CD4-positive, alpha-beta T cell (primary cell): ENCODE measurements at regions of chr13 and their contacts with region 1.

Region 1: GRCh38 chr13:44917589-44918325 is 71.5 kb downstream of the NUFIP1 start:
- DNase-seq: peak; percentile 95 to 99 (median 98)
- ATAC-seq: peak; percentile 77
- H3K4me3 ChIP-seq: peak overlapping the region; percentile 62
- H3K4me3 Mint-ChIP-seq: no peak overlapping the region
- H3K27ac ChIP-seq: peak overlapping the region; percentile 84 to 91
- H3K27ac Mint-ChIP-seq: no peak overlapping the region
- H3K4me1 ChIP-seq: peaks cover 19% of the 10 kb centered on the region
- H3K4me1 Mint-ChIP-seq: peaks cover 5% of the 10 kb centered on the region
- H3K27me3 ChIP-seq: no peaks in the 10 kb centered on the region
- H3K27me3 Mint-ChIP-seq: no peaks in the 10 kb centered on the region
- CTCF ChIP-seq: no peak

Region 2: GRCh38 chr13:44141725-44142539 is 775.8 kb before region 1 on chr13:
- CTCF ChIA-PET with region 1: no interaction called
- POLR2A ChIA-PET with region 1: no interaction called
- intact Hi-C with region 1: loop called in 1 of 2 experiments (anchors 5 kb)
- DNase-seq: peak; percentile 76 to 95 (median 90)
- ATAC-seq: peak; percentile 96
- H3K4me3 ChIP-seq: peak overlapping the region; percentile 84
- H3K4me3 Mint-ChIP-seq: peak overlapping the region; percentile 93
- H3K27ac ChIP-seq: peak overlapping the region; percentile 48 to 76
- H3K27ac Mint-ChIP-seq: peak overlapping the region; percentile 77
- H3K4me1 ChIP-seq: peaks cover 15% of the 10 kb centered on the region
- H3K4me1 Mint-ChIP-seq: peaks cover 16% of the 10 kb centered on the region
- H3K27me3 ChIP-seq: no peaks in the 10 kb centered on the region
- H3K27me3 Mint-ChIP-seq: no peaks in the 10 kb centered on the region
- CTCF ChIP-seq: no peak

Region 3: DNA sequence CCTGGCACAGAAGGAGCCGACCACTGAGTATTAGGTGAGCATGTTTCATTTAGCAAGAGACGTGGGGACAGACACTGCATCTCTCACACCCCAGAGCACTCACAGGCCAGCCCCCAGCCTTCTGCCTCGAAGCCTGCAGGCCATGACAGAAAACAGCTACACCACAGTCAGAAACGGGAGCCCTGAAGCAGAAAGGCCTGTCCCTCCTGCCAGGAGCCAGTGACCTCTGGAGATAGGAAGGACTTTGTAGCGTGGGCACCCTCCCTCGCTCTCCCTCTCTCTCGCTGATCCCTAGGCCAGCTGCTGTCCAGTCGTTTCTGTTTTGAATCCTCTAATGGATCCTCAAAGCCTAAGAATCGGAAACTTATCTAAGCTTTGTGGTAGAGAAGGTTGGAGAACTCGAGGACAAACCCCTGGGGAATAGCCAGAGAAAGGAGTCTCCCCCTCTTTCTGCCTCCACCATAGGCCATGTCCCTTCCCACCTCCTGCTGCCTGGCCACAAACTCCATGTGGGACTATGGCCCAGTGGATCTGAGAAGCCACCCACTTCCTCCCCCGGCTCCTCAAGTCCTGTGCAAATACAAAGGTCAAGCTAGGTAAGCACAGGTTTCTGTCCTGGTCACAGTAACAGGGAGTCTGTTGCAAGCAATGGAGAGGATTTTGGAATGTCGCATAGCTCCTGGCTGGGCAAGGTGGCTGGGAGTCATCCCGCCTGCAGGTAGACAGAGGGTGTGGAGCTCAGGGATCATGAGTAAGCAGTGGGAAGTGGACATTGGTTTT is 23.6 kb before region 1 on chr13:
- CTCF ChIA-PET with region 1: no interaction called
- POLR2A ChIA-PET with region 1: no interaction called
- intact Hi-C with region 1: no loop called
- DNase-seq: no peak
- ATAC-seq: no peak
- H3K4me3 ChIP-seq: no peak overlapping the region
- H3K4me3 Mint-ChIP-seq: no peak overlapping the region
- H3K27ac ChIP-seq: no peak overlapping the region
- H3K27ac Mint-ChIP-seq: no peak overlapping the region
- H3K4me1 ChIP-seq: no peaks in the 10 kb centered on the region
- H3K4me1 Mint-ChIP-seq: no peaks in the 10 kb centered on the region
- H3K27me3 ChIP-seq: no peaks in the 10 kb centered on the region
- H3K27me3 Mint-ChIP-seq: peaks cover 4% of the 10 kb centered on the region
- CTCF ChIP-seq: no peak

Region 4: DNA sequence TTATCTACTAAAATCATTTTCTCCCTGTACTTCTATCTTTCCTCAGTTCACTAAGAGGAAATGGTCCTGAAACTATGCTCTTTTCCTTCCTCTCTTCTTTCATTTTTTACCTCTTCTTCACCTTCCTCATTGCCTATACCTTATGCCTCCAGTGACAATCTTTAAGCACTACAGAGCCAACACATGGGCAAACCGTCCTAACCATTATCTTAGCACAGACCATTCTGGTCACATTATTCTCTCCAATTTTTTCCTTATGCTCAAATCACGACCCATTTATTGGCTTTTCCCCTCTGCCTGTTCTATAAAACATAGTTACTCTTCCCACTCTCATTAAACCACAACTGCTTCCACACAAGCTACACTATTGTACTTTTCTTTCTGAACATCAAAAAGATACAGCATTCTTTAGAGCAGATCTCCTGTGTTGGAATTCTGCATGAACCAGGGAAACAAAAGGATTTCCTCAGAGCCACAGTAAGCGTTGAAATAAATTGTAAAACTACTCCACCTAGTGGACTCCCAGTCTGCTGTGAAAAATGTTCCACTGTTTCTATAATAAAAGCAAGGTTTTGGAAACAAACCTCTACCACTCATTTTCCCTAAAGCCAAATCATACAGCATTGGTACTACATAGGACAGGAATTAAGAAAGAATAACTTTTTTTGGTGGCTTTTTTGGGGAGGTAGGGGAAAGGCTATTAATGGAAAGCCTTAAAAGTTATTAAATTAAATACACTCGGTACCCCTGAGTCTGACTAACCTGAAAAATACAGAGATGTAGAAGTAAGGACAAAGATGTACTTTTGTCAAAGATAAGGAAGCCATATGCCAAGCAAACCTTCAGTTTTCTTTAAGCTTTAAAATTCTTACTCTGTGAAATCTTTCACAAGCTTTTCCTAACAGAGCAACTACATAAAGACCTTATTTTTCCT is 52.1 kb after region 1 on chr13:
- CTCF ChIA-PET with region 1: interaction called, 3 read pairs
- POLR2A ChIA-PET with region 1: interaction called, 3 read pairs
- intact Hi-C with region 1: loop called in 1 of 2 experiments (anchors 5 kb)
- DNase-seq: peak in 4 of 14 experiments; percentile 5 to 47 (median 42)
- ATAC-seq: no peak
- H3K4me3 ChIP-seq: no peak overlapping the region
- H3K4me3 Mint-ChIP-seq: no peak overlapping the region
- H3K27ac ChIP-seq: no peak overlapping the region
- H3K27ac Mint-ChIP-seq: no peak overlapping the region
- H3K4me1 ChIP-seq: no peaks in the 10 kb centered on the region
- H3K4me1 Mint-ChIP-seq: no peaks in the 10 kb centered on the region
- H3K27me3 ChIP-seq: no peaks in the 10 kb centered on the region
- H3K27me3 Mint-ChIP-seq: no peaks in the 10 kb centered on the region
- CTCF ChIP-seq: peak; percentile 66

Region 5: GRCh38 chr13:45119991-45120864 is 202.5 kb after region 1 on chr13 and contains the start of gene GTF2F2:
- CTCF ChIA-PET with region 1: no interaction called
- POLR2A ChIA-PET with region 1: interaction called, 6 read pairs
- intact Hi-C with region 1: loop called in 1 of 2 experiments (anchors 2 kb)
- DNase-seq: peak; percentile 77 to 94 (median 82)
- ATAC-seq: peak; percentile 59
- H3K4me3 ChIP-seq: peak within 1 kb of the TSS; percentile 75
- H3K4me3 Mint-ChIP-seq: no peak within 1 kb of the TSS
- H3K27ac ChIP-seq: peak within 1 kb of the TSS; percentile 83 to 92
- H3K27ac Mint-ChIP-seq: no peak within 1 kb of the TSS
- H3K4me1 ChIP-seq: peaks cover 23% of the 10 kb centered on the region
- H3K4me1 Mint-ChIP-seq: peaks cover 12% of the 10 kb centered on the region
- H3K27me3 ChIP-seq: no peaks in the 10 kb centered on the region
- H3K27me3 Mint-ChIP-seq: no peaks in the 10 kb centered on the region
- CTCF ChIP-seq: no peak
- total RNA-seq, gene GTF2F2: 11.7 to 14.8 TPM

Region 6: DNA sequence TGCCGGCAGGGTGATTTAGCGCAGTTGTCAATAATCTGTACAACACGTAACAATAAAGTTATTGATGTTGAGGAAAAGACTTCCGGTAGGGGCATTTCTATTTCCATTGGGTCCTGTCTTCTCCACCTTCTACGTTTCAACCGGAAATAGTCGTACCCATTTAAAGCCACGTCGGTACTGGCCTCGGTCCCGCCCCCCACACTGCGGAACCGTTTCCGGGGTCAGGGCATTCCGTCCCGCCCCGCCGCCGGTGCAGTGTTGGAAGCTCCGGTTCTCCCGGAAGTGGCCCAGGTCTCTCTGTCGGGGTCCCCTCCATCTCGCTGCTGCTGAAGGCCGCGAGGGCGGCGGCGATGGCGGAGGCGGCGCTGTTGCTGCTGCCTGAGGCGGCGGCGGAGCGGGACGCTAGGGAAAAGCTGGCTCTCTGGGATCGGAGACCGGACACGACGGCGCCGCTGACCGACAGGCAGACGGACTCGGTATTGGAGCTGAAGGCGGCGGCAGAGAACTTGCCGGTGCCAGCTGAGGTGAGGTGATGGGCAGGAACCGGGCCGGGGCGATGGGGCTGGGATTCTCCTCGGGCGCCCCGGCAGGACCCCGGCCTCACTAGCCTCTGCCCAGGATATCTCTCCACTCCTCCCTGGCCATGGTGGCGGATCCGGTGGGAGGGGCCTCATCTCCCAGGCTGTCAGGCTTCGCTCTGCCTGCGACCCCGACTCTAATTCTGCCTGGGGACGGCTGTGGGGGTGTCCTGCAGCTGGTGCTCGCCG is 547.1 kb after region 1 on chr13 and contains the start of gene COG3:
- CTCF ChIA-PET with region 1: no interaction called
- POLR2A ChIA-PET with region 1: interaction called, 4 read pairs
- intact Hi-C with region 1: loop called in 1 of 2 experiments (anchors 10 kb)
- DNase-seq: peak; percentile 88 to 98 (median 93)
- ATAC-seq: peak; percentile 93
- H3K4me3 ChIP-seq: peak within 1 kb of the TSS; percentile 94
- H3K4me3 Mint-ChIP-seq: peak within 1 kb of the TSS; percentile 84
- H3K27ac ChIP-seq: peak within 1 kb of the TSS; percentile 78 to 97
- H3K27ac Mint-ChIP-seq: peak within 1 kb of the TSS; percentile 85
- H3K4me1 ChIP-seq: peaks cover 30% of the 10 kb centered on the region
- H3K4me1 Mint-ChIP-seq: peaks cover 60% of the 10 kb centered on the region
- H3K27me3 ChIP-seq: no peaks in the 10 kb centered on the region
- H3K27me3 Mint-ChIP-seq: no peaks in the 10 kb centered on the region
- CTCF ChIP-seq: peak; percentile 50
- total RNA-seq, gene COG3: 52.8 to 57.0 TPM

Region 7: DNA sequence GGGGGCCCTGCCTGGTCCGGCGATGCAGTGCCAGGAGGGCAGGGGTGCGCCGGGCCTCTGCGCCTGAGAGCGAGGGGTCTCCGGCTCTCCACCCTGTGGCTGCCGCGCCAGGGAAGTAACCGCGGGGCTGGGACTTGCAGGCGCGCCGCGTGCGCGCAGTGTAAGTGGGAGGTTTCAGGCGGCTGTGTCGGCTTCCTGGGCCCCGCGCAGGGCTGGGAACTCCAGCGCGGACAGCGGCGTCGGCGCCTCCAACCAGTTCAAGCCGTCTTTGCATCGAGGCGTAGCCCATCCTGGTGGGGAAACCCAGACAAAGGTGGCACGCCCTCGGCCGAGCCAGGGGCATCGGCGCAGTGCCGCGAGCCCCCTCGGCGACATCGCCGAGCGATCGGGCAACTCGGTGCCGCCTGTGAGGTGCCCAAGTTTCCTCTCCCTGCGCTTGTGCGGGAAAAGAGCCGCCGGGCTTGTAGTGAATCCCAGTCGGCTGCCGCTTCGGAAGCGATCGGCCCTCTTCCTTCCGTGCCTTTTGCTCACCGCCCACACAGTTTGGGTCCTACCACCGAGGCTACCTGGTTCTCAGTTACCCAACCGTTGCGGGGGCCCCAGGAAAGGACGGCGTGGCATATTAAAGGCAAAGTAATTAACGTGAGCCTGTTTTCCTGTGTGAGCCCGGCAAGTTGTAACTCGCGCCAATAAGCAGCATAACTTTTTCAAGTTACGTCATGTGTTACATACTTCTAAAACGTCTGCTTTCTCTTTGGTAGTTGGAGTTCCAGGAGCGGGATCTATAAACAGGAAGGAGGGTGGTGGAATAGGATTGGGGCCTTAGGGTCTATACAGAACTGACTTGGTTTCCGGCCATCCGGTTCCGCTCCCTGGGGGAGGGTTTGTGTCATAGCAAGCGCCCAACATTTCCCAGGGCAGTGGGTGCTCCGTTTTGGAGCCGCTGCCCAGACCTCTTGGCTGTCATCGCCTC is 1636.4 kb after region 1 on chr13:
- CTCF ChIA-PET with region 1: no interaction called
- POLR2A ChIA-PET with region 1: no interaction called
- intact Hi-C with region 1: loop called in 1 of 2 experiments (anchors 10 kb)
- DNase-seq: peak; percentile 33 to 92 (median 52)
- ATAC-seq: peak; percentile 57
- H3K4me3 ChIP-seq: peak overlapping the region; percentile 97
- H3K4me3 Mint-ChIP-seq: peak overlapping the region; percentile 97
- H3K27ac ChIP-seq: peak overlapping the region; percentile 72 to 89
- H3K27ac Mint-ChIP-seq: peak overlapping the region; percentile 89
- H3K4me1 ChIP-seq: peaks cover 29% of the 10 kb centered on the region
- H3K4me1 Mint-ChIP-seq: peaks cover 56% of the 10 kb centered on the region
- H3K27me3 ChIP-seq: peaks cover 0 to 6% of the 10 kb centered on the region in 2 experiments
- H3K27me3 Mint-ChIP-seq: no peaks in the 10 kb centered on the region
- CTCF ChIP-seq: peak; percentile 23